Motor neuron (in vitro differentiated cells): ENCODE measurements at regions of chr12 and their contacts with region 1.

Region 1: DNA sequence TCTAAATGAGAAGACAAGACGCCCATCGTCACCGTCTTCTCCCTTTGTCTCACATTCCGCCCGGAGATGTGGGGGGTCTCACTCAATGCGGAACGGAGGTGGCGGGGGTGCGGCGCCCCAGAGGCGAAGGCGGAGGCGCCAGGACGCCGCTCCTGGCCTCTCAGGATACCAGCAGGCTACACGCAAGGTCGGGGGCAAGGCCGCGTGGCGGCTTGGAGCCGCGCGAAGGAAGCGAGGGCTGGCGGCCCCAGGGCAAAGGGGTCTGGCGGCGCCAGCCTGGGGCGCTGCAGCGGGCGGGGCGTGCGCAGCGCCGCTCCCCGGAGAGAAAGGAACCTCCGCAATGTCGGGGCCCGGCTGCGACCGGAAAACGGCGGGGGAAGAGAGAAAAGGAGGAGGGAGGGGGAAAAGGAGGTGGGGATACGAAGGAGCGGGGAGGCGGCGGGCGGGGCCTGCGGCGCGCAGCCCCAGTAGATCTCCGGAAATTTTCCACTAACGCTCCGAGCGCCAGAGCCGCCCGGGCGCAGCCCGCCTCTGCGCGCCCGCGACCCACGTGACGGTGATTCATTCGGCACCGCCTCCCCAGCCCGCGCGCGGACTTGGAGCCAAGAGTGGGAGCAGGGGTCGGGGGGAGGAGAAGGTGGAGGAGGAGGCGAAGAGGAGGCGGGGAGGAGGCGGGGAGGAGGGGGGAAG is 10.5 kb upstream of the SLC38A2 start:
- ATAC-seq: peak; percentile 76 to 91 (median 86)
- H3K4me3 ChIP-seq: peak overlapping the region; percentile 60 to 90 (median 74)
- H3K27ac ChIP-seq: peak overlapping the region; percentile 95 to 99
- H3K4me1 ChIP-seq: peaks cover 14 to 15% of the 10 kb centered on the region in 2 donors

Region 2: GRCh38 chr12:46282829-46283228 is 100.3 kb before region 1 on chr12:
- in situ Hi-C with region 1: no loop called
- ATAC-seq: no peak
- H3K4me3 ChIP-seq: no peak overlapping the region
- H3K27ac ChIP-seq: no peak overlapping the region
- H3K4me1 ChIP-seq: no peaks in the 10 kb centered on the region

Region 3: GRCh38 chr12:46562625-46563228 is 179.6 kb after region 1 on chr12:
- in situ Hi-C with region 1: loop called in 2 of 9 experiments (anchors 25 kb)
- ATAC-seq: peak in 7 of 8 experiments; percentile 51 to 81 (median 66)
- H3K4me3 ChIP-seq: no peak overlapping the region
- H3K27ac ChIP-seq: no peak overlapping the region
- H3K4me1 ChIP-seq: peaks cover 15 to 16% of the 10 kb centered on the region in 2 donors

Region 4: GRCh38 chr12:46661110-46661845 is 278.2 kb after region 1 on chr12:
- in situ Hi-C with region 1: loop called in 3 of 9 experiments (anchors 25 kb)
- ATAC-seq: peak; percentile 47 to 97 (median 92)
- H3K4me3 ChIP-seq: no peak overlapping the region
- H3K27ac ChIP-seq: no peak overlapping the region
- H3K4me1 ChIP-seq: peaks cover 0 to 8% of the 10 kb centered on the region in 2 donors